AG04449 (cell line): ENCODE measurements at regions of chr9 and their contacts with region 1.

Region 1: DNA sequence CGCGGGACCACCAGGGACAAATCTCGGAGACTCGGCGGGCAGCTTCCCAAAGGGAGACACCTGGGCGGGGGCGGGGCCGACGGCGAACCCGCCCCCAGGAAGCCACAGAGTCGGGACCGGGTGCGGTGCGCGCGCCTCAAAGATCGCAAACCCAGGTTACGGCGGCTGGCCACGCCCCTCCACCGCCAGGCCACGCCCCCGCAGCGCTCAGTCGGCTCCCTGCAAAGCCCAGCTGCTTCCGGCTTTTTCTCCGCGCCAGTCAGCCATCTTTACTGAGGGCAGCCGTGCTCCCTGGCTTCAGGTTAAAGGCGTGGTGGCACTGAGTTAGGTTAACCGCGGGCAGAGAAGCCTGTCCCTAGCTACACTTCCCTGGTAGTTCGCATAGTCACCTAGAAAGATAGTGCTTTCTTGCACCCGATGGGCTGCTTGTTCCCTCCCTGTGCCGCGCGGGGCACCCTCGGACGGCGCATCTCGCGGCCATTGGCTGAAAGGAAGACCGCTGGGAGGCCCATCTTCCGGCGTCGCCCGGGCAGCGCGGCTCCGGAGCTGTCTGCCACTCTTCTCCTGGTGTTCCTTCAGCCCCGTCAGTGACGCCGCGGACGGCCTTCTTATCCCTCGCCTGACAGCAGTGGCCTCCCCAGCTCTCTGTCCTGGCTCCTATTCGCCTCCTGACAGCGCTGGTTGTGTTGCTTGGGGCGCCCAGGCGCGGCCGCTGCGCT is at the start of gene TBC1D2:
- DNase-seq: peak; percentile 45
- H3K4me3 ChIP-seq: peak within 1 kb of the TSS; percentile 87
- CTCF ChIP-seq: no peak

Region 2: GRCh38 chr9:97803167-97804058 is 452.3 kb before region 1 on chr9:
- CTCF ChIA-PET with region 1: no interaction called
- POLR2A ChIA-PET with region 1: no interaction called
- DNase-seq: no peak
- H3K4me3 ChIP-seq: peak overlapping the region; percentile 58
- CTCF ChIP-seq: no peak

Region 3: GRCh38 chr9:98074115-98074990 is 181.4 kb before region 1 on chr9:
- CTCF ChIA-PET with region 1: interaction called, 20 read pairs
- POLR2A ChIA-PET with region 1: no interaction called
- DNase-seq: no peak
- H3K4me3 ChIP-seq: no peak overlapping the region
- CTCF ChIP-seq: peak; percentile 79

Region 4: DNA sequence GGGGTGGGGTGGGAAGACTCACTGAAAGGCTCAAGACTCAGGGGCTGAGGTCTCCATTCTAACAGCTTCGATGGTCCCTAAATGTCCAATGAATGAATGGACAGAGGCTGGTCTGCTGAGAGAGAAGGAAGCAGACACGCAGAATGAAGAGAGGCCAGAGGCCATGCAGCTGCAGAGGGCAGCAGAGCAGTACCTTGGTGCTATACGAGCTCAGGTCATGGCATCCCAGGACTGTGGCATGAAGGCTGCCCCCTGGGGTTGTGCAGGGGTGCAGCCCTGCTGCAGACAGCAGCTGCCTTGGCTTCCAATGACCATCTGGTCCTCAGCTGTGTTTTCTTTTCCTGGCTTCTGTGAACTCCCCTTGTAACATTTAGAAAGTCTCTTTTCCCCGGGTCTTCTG is 48.1 kb before region 1 on chr9:
- CTCF ChIA-PET with region 1: interaction called, 115 read pairs
- POLR2A ChIA-PET with region 1: interaction called, 3 read pairs
- DNase-seq: no peak
- H3K4me3 ChIP-seq: no peak overlapping the region
- CTCF ChIP-seq: peak; percentile 12

Region 5: GRCh38 chr9:98215821-98216220 is 39.9 kb before region 1 on chr9:
- CTCF ChIA-PET with region 1: interaction called, 115 read pairs
- POLR2A ChIA-PET with region 1: interaction called, 3 read pairs
- DNase-seq: no peak
- H3K4me3 ChIP-seq: no peak overlapping the region
- CTCF ChIP-seq: peak; percentile 46

Region 6: DNA sequence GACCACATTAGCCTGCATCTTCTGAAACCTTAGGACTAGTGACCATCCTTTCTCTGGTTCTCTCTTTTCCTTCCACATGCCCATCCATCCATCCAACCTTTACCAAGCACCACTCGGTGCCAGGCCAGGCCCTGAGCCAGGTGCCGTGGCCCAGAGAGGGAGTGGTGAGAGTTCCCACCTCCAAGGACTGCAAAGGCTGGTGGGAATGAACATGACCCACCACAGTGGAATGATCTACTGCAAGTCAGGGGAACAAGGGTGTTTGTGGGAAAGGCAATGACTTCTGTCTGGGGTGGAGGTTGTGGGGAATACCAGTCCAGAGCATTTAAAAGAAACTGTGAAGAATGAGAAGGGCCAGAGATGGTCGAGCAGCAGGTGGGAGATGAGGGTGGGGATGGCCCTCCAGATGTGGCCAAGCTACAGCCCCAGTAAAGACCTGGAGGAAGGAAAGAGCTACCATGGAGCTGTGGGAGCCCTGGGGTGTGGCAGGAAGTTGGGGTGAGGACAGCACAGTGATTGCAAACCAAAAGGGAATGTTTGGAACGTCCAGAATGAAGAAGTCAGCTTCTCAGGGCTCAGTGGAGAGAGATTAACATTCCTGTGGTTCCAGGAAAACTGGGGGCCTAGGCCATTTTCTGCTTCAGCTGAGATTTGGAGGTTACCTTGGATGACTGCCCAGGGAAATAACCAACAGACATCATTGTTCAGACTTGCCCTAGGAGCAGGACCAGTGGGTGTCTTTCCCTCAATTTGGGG is 32.7 kb before region 1 on chr9:
- CTCF ChIA-PET with region 1: interaction called, 12 read pairs
- POLR2A ChIA-PET with region 1: interaction called, 18 read pairs
- DNase-seq: peak; percentile 99
- H3K4me3 ChIP-seq: no peak overlapping the region
- CTCF ChIP-seq: no peak